GM23248 (cell line): ENCODE measurements at regions of chr5 and their contacts with region 1.

Region 1: GRCh38 chr5:59660737-59661136 is 232.8 kb downstream of the PDE4D start:
- DNase-seq: peak; percentile 57
- H3K4me3 ChIP-seq: no peak overlapping the region
- H3K27ac ChIP-seq: no peak overlapping the region
- H3K4me1 ChIP-seq: no peaks in the 10 kb centered on the region; the same call in 1 of the 2 replicates
- H3K27me3 ChIP-seq: no peaks in the 10 kb centered on the region

Region 2: GRCh38 chr5:58940446-58940845 is 720.3 kb before region 1 on chr5:
- in situ Hi-C with region 1: no loop called
- DNase-seq: no peak
- H3K4me3 ChIP-seq: no peak overlapping the region
- H3K27ac ChIP-seq: no peak overlapping the region
- H3K4me1 ChIP-seq: no peaks in the 10 kb centered on the region
- H3K27me3 ChIP-seq: no peaks in the 10 kb centered on the region

Region 3: DNA sequence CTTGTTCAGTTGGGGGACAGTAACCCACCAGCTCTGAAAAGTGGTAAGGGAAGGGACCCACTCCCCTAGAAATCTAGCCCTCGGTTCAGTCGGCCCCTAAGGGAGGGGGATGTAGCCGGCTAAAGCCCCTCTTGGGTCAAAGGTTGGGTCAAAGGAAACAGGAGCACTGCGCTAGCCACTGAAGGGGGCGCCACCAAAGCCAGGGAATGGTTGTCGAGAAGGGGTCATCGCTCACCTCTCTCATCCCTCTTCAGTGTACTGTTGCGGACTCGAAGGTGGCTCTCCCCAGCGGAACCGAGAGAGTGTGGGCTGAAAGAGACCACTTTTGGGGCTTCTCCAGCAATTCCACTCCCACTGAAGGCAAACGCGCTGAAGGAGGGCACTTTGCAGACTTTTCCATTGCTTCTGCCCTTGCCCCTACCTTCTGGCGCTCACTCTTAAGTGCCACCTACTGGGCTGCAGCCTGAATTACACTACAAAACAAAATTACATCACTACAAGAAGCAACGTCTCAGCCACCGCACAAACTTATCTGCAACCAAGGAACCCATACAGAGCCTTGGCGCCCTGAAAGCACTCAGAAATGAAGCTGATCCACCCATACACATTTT is 164.1 kb before region 1 on chr5:
- in situ Hi-C with region 1: loop called (anchors 10 kb)
- DNase-seq: peak; percentile 48
- H3K4me3 ChIP-seq: no peak overlapping the region
- H3K27ac ChIP-seq: no peak overlapping the region
- H3K4me1 ChIP-seq: no peaks in the 10 kb centered on the region
- H3K27me3 ChIP-seq: peaks cover 24% of the 10 kb centered on the region